Ascending aorta (tissue), 2 donors: ENCODE measurements at regions of chr9 and their contacts with region 1.

Region 1: GRCh38 chr9:503881-504852 is 289.5 kb downstream of the DOCK8 start:
- DNase-seq: peak in 1 of 2 donors; percentile 85
- H3K4me3 ChIP-seq: peak within 1 kb of the TSS; percentile 80 to 86
- H3K27ac ChIP-seq: peak within 1 kb of the TSS; percentile 66 to 78
- H3K4me1 ChIP-seq: peaks cover 0 to 19% of the 10 kb centered on the region in 2 donors
- H3K27me3 ChIP-seq: no peaks in the 10 kb centered on the region
- CTCF ChIP-seq: peak in 1 of 3 experiments; percentile 31

Region 2: GRCh38 chr9:306887-307286 is 197.3 kb before region 1 on chr9:
- intact Hi-C with region 1: no loop called
- DNase-seq: no peak
- H3K4me3 ChIP-seq: no peak overlapping the region
- H3K27ac ChIP-seq: no peak overlapping the region
- H3K4me1 ChIP-seq: no peaks in the 10 kb centered on the region
- H3K27me3 ChIP-seq: no peaks in the 10 kb centered on the region
- CTCF ChIP-seq: peak in 1 of 3 experiments; percentile 12

Region 3: GRCh38 chr9:469672-470551 is 34.3 kb before region 1 on chr9:
- intact Hi-C with region 1: loop called (anchors 2 kb)
- DNase-seq: peak; percentile 15 to 87
- H3K4me3 ChIP-seq: peak overlapping the region; percentile 77 to 80
- H3K27ac ChIP-seq: peak overlapping the region in 1 of 2 donors; percentile 43
- H3K4me1 ChIP-seq: peaks cover 3 to 8% of the 10 kb centered on the region in 2 donors
- H3K27me3 ChIP-seq: no peaks in the 10 kb centered on the region
- CTCF ChIP-seq: no peak

Region 4: GRCh38 chr9:522658-523057 is 18.5 kb after region 1 on chr9:
- intact Hi-C with region 1: loop called (anchors 2 kb)
- DNase-seq: peak in 1 of 2 donors; percentile 70
- H3K4me3 ChIP-seq: no peak overlapping the region
- H3K27ac ChIP-seq: peak overlapping the region; percentile 42 to 50
- H3K4me1 ChIP-seq: peaks cover 3 to 32% of the 10 kb centered on the region in 2 donors
- H3K27me3 ChIP-seq: no peaks in the 10 kb centered on the region
- CTCF ChIP-seq: no peak

Region 5: GRCh38 chr9:530681-531080 is 26.5 kb after region 1 on chr9:
- intact Hi-C with region 1: loop called (anchors 2 kb)
- DNase-seq: peak; percentile 37 to 81
- H3K4me3 ChIP-seq: no peak overlapping the region
- H3K27ac ChIP-seq: peak overlapping the region; percentile 67 to 75
- H3K4me1 ChIP-seq: peaks cover 0 to 34% of the 10 kb centered on the region in 2 donors
- H3K27me3 ChIP-seq: no peaks in the 10 kb centered on the region
- CTCF ChIP-seq: no peak

Region 6: GRCh38 chr9:546797-547223 is 42.6 kb after region 1 on chr9:
- intact Hi-C with region 1: loop called (anchors 2 kb)
- DNase-seq: no peak
- H3K4me3 ChIP-seq: peak overlapping the region in 1 of 2 donors; percentile 16
- H3K27ac ChIP-seq: peak overlapping the region in 1 of 2 donors; percentile 22
- H3K4me1 ChIP-seq: peaks cover 3 to 17% of the 10 kb centered on the region in 2 donors
- H3K27me3 ChIP-seq: no peaks in the 10 kb centered on the region
- CTCF ChIP-seq: peak in 1 of 3 experiments; percentile 46